SK-N-SH (cell line): ENCODE measurements at regions of chr15 and their contacts with region 1.

Region 1: GRCh38 chr15:45705510-45706473 is 71.0 kb downstream of the SQOR start:
- DNase-seq: peak; percentile 82
- H3K4me3 ChIP-seq: peak overlapping the region; percentile 54 to 65
- H3K27ac ChIP-seq: no peak overlapping the region; a peak in 1 of 4 replicates
- H3K4me1 ChIP-seq: no peaks in the 10 kb centered on the region
- H3K27me3 ChIP-seq: no peaks in the 10 kb centered on the region
- CTCF ChIP-seq: peak; percentile 88
- EP300 ChIP-seq: no peak
- RAD21 ChIP-seq: peak; percentile 85

Region 2: DNA sequence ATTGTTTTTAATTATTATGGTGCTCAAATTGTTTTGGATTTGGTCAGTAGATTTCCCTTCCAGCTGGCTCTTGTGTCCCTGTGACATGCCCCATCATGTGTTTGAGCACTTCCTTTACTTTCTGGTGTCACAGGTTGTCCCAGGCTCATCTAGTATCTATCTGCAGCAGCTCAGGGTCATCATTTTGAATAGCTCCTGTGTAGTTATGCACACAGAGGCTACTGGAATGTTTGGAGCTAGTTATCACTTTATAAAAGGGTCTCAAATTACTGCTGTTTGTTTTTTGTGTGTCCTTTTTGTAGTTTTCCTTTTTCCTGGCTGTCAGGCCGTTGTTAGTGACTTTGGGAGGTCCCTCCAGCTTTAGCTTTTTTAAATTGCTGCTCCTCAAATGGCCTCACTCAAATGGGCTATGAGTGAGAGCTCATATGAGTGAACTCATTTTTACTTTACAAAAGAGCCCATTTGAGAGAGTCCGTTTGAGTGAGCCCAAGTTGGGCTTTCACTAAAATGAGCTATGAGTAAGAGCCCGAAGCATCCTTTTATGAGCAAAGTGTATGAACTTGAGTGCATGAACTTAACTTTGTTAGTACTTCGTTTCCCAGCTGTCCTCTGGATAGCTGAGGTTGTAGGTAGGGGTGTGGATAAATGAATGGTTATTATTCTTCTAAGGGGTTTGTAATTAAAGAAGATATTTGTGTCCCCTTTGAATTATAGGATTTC is 27.2 kb before region 1 on chr15:
- CTCF ChIA-PET with region 1: interaction called, 10 read pairs
- POLR2A ChIA-PET with region 1: no interaction called
- DNase-seq: no peak
- H3K4me3 ChIP-seq: no peak overlapping the region
- H3K27ac ChIP-seq: no peak overlapping the region
- H3K4me1 ChIP-seq: no peaks in the 10 kb centered on the region; a peak in 1 of 4 replicates
- H3K27me3 ChIP-seq: no peaks in the 10 kb centered on the region
- CTCF ChIP-seq: no peak
- EP300 ChIP-seq: no peak
- RAD21 ChIP-seq: no peak

Region 3: GRCh38 chr15:45690581-45691260 is 15.1 kb before region 1 on chr15:
- CTCF ChIA-PET with region 1: interaction called, 16 read pairs
- POLR2A ChIA-PET with region 1: no interaction called
- DNase-seq: no peak
- H3K4me3 ChIP-seq: no peak overlapping the region
- H3K27ac ChIP-seq: no peak overlapping the region
- H3K4me1 ChIP-seq: no peaks in the 10 kb centered on the region
- H3K27me3 ChIP-seq: no peaks in the 10 kb centered on the region
- CTCF ChIP-seq: no peak
- EP300 ChIP-seq: no peak
- RAD21 ChIP-seq: no peak

Region 4: GRCh38 chr15:46280762-46281542 is 575.2 kb after region 1 on chr15:
- CTCF ChIA-PET with region 1: interaction called, 10 read pairs
- POLR2A ChIA-PET with region 1: no interaction called
- DNase-seq: peak; percentile 23
- H3K4me3 ChIP-seq: no peak overlapping the region
- H3K27ac ChIP-seq: no peak overlapping the region
- H3K4me1 ChIP-seq: peaks cover 0 to 6% of the 10 kb centered on the region in 2 experiments; a peak in 2 of 4 replicates
- H3K27me3 ChIP-seq: no peaks in the 10 kb centered on the region
- CTCF ChIP-seq: 0 out of 2 replicates have a peak, but pooled peaks have one; percentile 8
- EP300 ChIP-seq: no peak
- RAD21 ChIP-seq: peak; percentile 81